CD4-positive, alpha-beta memory T cell (primary cell): ENCODE measurements at regions of chr2 and their contacts with region 1.

Region 1: DNA sequence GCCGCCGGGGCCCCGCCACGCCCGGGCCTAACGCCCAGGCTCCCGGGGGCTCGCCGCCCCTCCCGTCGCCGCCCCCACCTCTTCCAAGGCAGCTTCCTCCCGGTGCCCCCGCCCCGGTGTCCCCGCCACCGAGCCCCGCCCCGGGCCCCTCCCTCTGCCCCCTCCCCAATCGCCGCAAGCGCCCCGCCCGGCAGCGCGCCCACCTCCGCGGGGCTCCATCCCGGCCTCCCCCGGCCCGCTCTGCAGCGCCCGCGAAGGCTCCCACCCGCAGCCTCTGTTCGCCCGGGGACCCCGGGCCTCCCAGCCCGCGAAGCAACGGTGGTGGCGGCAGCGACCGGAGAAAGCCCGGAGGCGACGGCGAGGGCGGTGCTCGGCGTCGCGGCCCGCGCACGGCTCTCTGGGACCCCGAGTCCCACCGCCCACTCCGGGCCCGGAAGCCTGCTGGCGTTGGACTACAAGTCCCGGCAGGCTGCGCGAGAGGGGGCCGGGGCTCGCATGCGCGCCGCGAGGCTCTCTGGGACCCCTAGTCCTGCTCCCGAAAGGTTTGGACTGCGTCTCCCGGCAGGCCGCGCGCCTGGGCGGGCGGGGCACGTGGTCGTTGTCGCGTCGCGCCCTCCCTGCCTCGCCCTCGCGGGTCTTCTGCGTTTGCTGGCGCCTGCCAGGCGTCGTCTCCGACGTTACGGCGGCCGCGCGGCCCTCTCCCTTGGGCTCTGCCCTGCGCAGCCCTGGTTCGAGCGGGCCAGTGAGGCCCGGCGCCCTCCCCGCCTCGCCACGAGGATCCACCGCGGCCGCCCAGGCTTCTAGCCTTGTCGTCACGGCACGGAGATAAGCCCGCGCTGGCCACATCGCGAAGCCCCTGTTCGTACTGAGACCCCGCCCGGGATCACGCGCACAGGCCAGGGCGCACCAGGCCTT is at the start of gene STK25:
- DNase-seq: peak; percentile 97 to 98 (median 98)
- H3K4me3 ChIP-seq: peak within 1 kb of the TSS; percentile 29 to 58
- H3K4me3 Mint-ChIP-seq: peak within 1 kb of the TSS; percentile 81 to 85 (median 83)
- H3K27ac ChIP-seq: peak within 1 kb of the TSS; percentile 82
- H3K27ac Mint-ChIP-seq: peak within 1 kb of the TSS; percentile 62 to 94 (median 75)
- H3K4me1 ChIP-seq: peaks cover 18% of the 10 kb centered on the region
- H3K4me1 Mint-ChIP-seq: peaks cover 11 to 41% (median 22%) of the 10 kb centered on the region in 4 donors
- H3K27me3 ChIP-seq: no peaks in the 10 kb centered on the region
- H3K27me3 Mint-ChIP-seq: no peaks in the 10 kb centered on the region
- total RNA-seq, gene STK25: 178 to 182 TPM

Region 2: GRCh38 chr2:241271641-241272297 is 236.7 kb before region 1 on chr2:
- CTCF ChIA-PET with region 1: no interaction called
- POLR2A ChIA-PET with region 1: no interaction called
- intact Hi-C with region 1: loop called (anchors 5 kb)
- DNase-seq: peak; percentile 44 to 72 (median 50)
- H3K4me3 ChIP-seq: peak overlapping the region in 1 of 2 donors; percentile 63
- H3K4me3 Mint-ChIP-seq: peak overlapping the region; percentile 92 to 97 (median 94)
- H3K27ac ChIP-seq: peak overlapping the region; percentile 58
- H3K27ac Mint-ChIP-seq: peak overlapping the region; percentile 39 to 97 (median 93)
- H3K4me1 ChIP-seq: peaks cover 22% of the 10 kb centered on the region
- H3K4me1 Mint-ChIP-seq: peaks cover 26 to 47% (median 38%) of the 10 kb centered on the region in 4 donors
- H3K27me3 ChIP-seq: no peaks in the 10 kb centered on the region
- H3K27me3 Mint-ChIP-seq: no peaks in the 10 kb centered on the region

Region 3: GRCh38 chr2:241443486-241444223 is 64.8 kb before region 1 on chr2:
- CTCF ChIA-PET with region 1: no interaction called
- POLR2A ChIA-PET with region 1: interaction called, 7 read pairs
- intact Hi-C with region 1: loop called (anchors 2 kb)
- DNase-seq: peak; percentile 90 to 96 (median 94)
- H3K4me3 ChIP-seq: no peak overlapping the region
- H3K4me3 Mint-ChIP-seq: peak overlapping the region; percentile 2 to 77 (median 44)
- H3K27ac ChIP-seq: no peak overlapping the region
- H3K27ac Mint-ChIP-seq: peak overlapping the region in 6 of 7 donors; percentile 2 to 90 (median 71)
- H3K4me1 ChIP-seq: peaks cover 24% of the 10 kb centered on the region
- H3K4me1 Mint-ChIP-seq: peaks cover 8 to 28% (median 20%) of the 10 kb centered on the region in 4 donors
- H3K27me3 ChIP-seq: peaks cover 42% of the 10 kb centered on the region
- H3K27me3 Mint-ChIP-seq: peaks cover 20 to 39% of the 10 kb centered on the region in 2 donors

Region 4: GRCh38 chr2:241617431-241618154 is 109.1 kb after region 1 on chr2:
- CTCF ChIA-PET with region 1: no interaction called
- POLR2A ChIA-PET with region 1: no interaction called
- intact Hi-C with region 1: loop called (anchors 1 kb)
- DNase-seq: peak; percentile 52 to 65 (median 59)
- H3K4me3 ChIP-seq: peak overlapping the region; percentile 54 to 67
- H3K4me3 Mint-ChIP-seq: peak overlapping the region; percentile 85 to 96 (median 90)
- H3K27ac ChIP-seq: peak overlapping the region; percentile 55
- H3K27ac Mint-ChIP-seq: peak overlapping the region; percentile 74 to 95 (median 90)
- H3K4me1 ChIP-seq: peaks cover 29% of the 10 kb centered on the region
- H3K4me1 Mint-ChIP-seq: peaks cover 22 to 44% (median 30%) of the 10 kb centered on the region in 4 donors
- H3K27me3 ChIP-seq: no peaks in the 10 kb centered on the region
- H3K27me3 Mint-ChIP-seq: no peaks in the 10 kb centered on the region

Region 5: DNA sequence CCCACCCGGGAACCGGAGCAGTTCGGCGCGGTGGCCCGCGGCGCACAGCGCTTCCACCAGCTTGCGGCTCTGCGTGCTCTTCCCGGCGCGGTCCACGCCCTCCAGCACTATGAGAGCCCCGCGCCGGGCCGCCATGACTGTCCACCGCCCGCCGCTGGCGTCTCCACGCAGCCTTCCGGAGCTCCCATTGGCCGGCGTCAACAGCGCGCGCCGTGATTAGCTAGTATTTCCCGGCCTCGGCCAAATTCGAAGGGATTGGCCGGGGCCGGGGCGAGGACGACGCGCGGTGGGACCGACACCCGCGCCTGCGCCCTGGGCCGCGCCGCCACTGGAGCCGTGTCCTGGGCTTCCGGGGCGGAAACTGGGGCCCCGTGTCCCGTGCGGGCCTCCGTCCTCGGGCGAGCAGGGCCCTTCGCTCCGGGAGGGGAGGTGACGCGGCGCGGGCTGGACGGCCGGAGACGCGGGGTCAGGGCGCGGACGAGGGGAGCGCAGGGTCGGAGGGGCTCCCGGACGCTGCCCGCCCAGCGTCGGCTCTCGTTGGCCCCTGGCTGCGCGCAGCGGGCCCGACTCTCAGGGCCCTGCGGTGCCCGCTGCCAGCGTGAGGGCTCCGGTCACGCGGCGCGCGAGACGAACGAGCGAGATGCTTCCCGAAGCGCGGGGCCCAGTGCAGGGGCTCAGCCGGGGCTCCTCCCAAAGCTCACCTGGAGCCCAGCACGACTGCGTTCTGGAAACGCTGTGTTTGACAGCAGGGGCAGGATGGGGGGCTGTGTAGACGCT is 178.3 kb after region 1 on chr2 and contains the start of gene DTYMK:
- CTCF ChIA-PET with region 1: no interaction called
- POLR2A ChIA-PET with region 1: no interaction called
- intact Hi-C with region 1: loop called (anchors 1 kb)
- DNase-seq: peak; percentile 95 to 98 (median 97)
- H3K4me3 ChIP-seq: peak within 1 kb of the TSS; percentile 57 to 89
- H3K4me3 Mint-ChIP-seq: peak within 1 kb of the TSS; percentile 87 to 96 (median 94)
- H3K27ac ChIP-seq: peak within 1 kb of the TSS; percentile 80
- H3K27ac Mint-ChIP-seq: peak within 1 kb of the TSS; percentile 85 to 93 (median 91)
- H3K4me1 ChIP-seq: peaks cover 32% of the 10 kb centered on the region
- H3K4me1 Mint-ChIP-seq: peaks cover 14 to 40% (median 26%) of the 10 kb centered on the region in 4 donors
- H3K27me3 ChIP-seq: no peaks in the 10 kb centered on the region
- H3K27me3 Mint-ChIP-seq: no peaks in the 10 kb centered on the region
- total RNA-seq, gene DTYMK: 18.8 TPM